GM12878 (cell line): ENCODE measurements at regions of chr1 and their contacts with region 1.

Region 1: GRCh38 chr1:205477759-205478247 is 22.0 kb upstream of the BLACAT1 start:
- DNase-seq: no peak
- ATAC-seq: no peak
- H3K4me3 ChIP-seq: no peak overlapping the region
- H3K27ac ChIP-seq: no peak overlapping the region
- H3K4me1 ChIP-seq: peaks cover 25% of the 10 kb centered on the region
- H3K27me3 ChIP-seq: peaks cover 0 to 2% of the 10 kb centered on the region in 2 experiments; a peak in 1 of 4 replicates
- CTCF ChIP-seq: no peak
- EP300 ChIP-seq: no peak
- POLR2A ChIP-seq: no peak
- RAD21 ChIP-seq: no peak

Region 2: DNA sequence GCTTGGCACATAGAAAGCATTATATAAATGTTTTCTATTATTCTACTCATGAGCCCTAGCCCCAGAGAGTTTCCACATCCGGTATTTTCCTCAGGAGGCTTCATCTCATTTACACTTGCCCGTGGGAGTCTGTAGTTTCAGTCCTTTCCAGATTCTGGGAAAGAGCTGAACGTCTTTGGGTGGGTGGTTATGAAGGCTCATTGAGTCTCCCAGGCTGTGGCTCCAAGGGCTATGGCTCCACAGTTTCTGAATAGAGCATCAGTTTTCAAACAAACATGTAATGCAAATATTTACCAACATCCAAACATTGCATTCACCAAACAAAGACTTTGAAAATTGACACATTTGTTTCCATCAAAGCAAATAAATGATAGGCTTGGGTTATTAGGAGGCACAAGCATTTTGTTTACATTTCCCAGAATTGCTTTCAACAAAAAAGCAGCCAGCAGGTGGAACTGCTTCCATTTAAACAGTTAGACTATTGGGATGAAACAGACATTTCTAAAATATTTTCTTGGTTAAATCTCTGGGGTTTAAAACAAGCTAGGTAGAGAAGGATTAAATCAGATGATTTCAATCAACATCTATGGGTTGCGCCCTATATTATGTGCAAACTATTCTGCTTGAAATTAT is 54.7 kb before region 1 on chr1:
- CTCF ChIA-PET with region 1: interaction called, 191 read pairs
- POLR2A ChIA-PET with region 1: no interaction called
- RAD21 ChIA-PET with region 1: interaction called, 6 read pairs
- SMC1A ChIA-PET with region 1: interaction called, 13 read pairs
- in situ Hi-C with region 1: no loop called
- intact Hi-C with region 1: no loop called
- DNase-seq: no peak
- ATAC-seq: no peak
- H3K4me3 ChIP-seq: no peak overlapping the region
- H3K27ac ChIP-seq: no peak overlapping the region
- H3K4me1 ChIP-seq: no peaks in the 10 kb centered on the region
- H3K27me3 ChIP-seq: peaks cover 6% of the 10 kb centered on the region in 2 experiments; a peak in 3 of 4 replicates
- CTCF ChIP-seq: peak in 1 of 3 experiments; percentile 26; a peak in 1 of 6 replicates
- EP300 ChIP-seq: no peak
- POLR2A ChIP-seq: no peak
- RAD21 ChIP-seq: 0 out of 2 replicates have a peak, but pooled peaks have one; percentile 3

Region 3: DNA sequence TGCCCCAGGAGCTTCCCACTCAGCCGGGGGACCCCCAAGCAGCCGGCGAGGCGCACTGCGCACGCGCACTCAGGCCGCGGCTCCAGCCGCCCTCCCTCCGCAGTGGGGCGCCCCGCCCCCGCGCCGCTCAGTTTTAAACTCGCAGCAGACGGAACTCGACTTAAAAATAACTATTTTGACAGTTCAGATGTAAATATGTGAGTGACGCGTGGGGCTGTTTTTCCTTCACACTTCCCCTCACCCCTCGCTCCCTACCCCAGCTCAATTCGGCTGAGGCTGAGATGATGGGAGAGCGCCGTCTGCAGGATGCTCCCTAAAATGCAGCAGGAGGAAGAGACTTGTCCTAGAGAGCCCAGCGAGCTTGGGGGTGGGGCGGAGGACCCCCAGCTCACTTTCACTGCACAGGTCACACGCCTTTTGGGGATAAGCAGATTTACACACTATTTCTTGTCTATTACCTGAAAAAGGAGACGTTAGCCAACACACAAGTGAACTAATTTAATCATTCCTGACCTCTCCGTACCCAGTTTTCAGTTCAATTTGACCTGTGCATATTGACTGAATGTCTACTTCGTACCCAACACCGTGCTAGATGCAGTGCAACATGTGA is 47.0 kb before region 1 on chr1:
- CTCF ChIA-PET with region 1: interaction called, 191 read pairs
- POLR2A ChIA-PET with region 1: no interaction called
- RAD21 ChIA-PET with region 1: interaction called, 14 read pairs
- SMC1A ChIA-PET with region 1: interaction called, 19 read pairs
- in situ Hi-C with region 1: no loop called
- intact Hi-C with region 1: no loop called
- DNase-seq: peak; percentile 13
- ATAC-seq: peak; percentile 85
- H3K4me3 ChIP-seq: peak overlapping the region; percentile 54; the same call in 1 of the 2 replicates
- H3K27ac ChIP-seq: no peak overlapping the region
- H3K4me1 ChIP-seq: peaks cover 3% of the 10 kb centered on the region
- H3K27me3 ChIP-seq: peaks cover 3 to 4% of the 10 kb centered on the region in 2 experiments; a peak in 2 of 4 replicates
- CTCF ChIP-seq: peak; percentile 53 to 85 (median 72)
- EP300 ChIP-seq: peak in 1 of 2 experiments; percentile 38; a peak in 1 of 4 replicates
- POLR2A ChIP-seq: no peak
- RAD21 ChIP-seq: peak; percentile 45

Region 4: GRCh38 chr1:205440476-205441317 is 37.1 kb before region 1 on chr1:
- CTCF ChIA-PET with region 1: interaction called, 191 read pairs
- POLR2A ChIA-PET with region 1: interaction called, 4 read pairs
- RAD21 ChIA-PET with region 1: interaction called, 42 read pairs
- SMC1A ChIA-PET with region 1: interaction called, 35 read pairs
- in situ Hi-C with region 1: no loop called
- intact Hi-C with region 1: loop called (anchors 2 kb)
- DNase-seq: peak; percentile 47
- ATAC-seq: peak; percentile 92
- H3K4me3 ChIP-seq: peak overlapping the region; percentile 60; the same call in 1 of the 2 replicates
- H3K27ac ChIP-seq: peak overlapping the region; percentile 59
- H3K4me1 ChIP-seq: peaks cover 20% of the 10 kb centered on the region
- H3K27me3 ChIP-seq: no peaks in the 10 kb centered on the region; a peak in 1 of 4 replicates
- CTCF ChIP-seq: no peak
- EP300 ChIP-seq: no peak
- POLR2A ChIP-seq: peak; percentile 55; the same call in 1 of the 2 replicates
- RAD21 ChIP-seq: no peak